B cell (primary cell): ENCODE measurements at regions of chr17 and their contacts with region 1.

Region 1: GRCh38 chr17:29124117-29124924 is 55.9 kb downstream of the MYO18A start:
- DNase-seq: peak; percentile 63
- ATAC-seq: peak; percentile 84
- H3K4me3 ChIP-seq: no peak overlapping the region
- H3K4me3 Mint-ChIP-seq: no peak overlapping the region
- H3K27ac ChIP-seq: no peak overlapping the region
- H3K27ac Mint-ChIP-seq: peak overlapping the region; percentile 7
- H3K4me1 ChIP-seq: peaks cover 0 to 4% of the 10 kb centered on the region in 2 donors
- H3K4me1 Mint-ChIP-seq: no peaks in the 10 kb centered on the region
- H3K27me3 ChIP-seq: no peaks in the 10 kb centered on the region
- H3K27me3 Mint-ChIP-seq: no peaks in the 10 kb centered on the region
- CTCF ChIP-seq: peak; percentile 60

Region 2: GRCh38 chr17:28967221-28968140 is 156.8 kb before region 1 on chr17:
- CTCF ChIA-PET with region 1: interaction called, 359 read pairs
- POLR2A ChIA-PET with region 1: interaction called, 3 read pairs
- intact Hi-C with region 1: no loop called
- DNase-seq: peak; percentile 50
- ATAC-seq: peak; percentile 21
- H3K4me3 ChIP-seq: no peak overlapping the region
- H3K4me3 Mint-ChIP-seq: no peak overlapping the region
- H3K27ac ChIP-seq: peak overlapping the region in 1 of 2 donors; percentile 40
- H3K27ac Mint-ChIP-seq: peak overlapping the region; percentile 66
- H3K4me1 ChIP-seq: peaks cover 4 to 17% of the 10 kb centered on the region in 2 donors
- H3K4me1 Mint-ChIP-seq: peaks cover 9% of the 10 kb centered on the region
- H3K27me3 ChIP-seq: peaks cover 0 to 15% (median 2%) of the 10 kb centered on the region in 4 experiments
- H3K27me3 Mint-ChIP-seq: peaks cover 13% of the 10 kb centered on the region
- CTCF ChIP-seq: no peak

Region 3: DNA sequence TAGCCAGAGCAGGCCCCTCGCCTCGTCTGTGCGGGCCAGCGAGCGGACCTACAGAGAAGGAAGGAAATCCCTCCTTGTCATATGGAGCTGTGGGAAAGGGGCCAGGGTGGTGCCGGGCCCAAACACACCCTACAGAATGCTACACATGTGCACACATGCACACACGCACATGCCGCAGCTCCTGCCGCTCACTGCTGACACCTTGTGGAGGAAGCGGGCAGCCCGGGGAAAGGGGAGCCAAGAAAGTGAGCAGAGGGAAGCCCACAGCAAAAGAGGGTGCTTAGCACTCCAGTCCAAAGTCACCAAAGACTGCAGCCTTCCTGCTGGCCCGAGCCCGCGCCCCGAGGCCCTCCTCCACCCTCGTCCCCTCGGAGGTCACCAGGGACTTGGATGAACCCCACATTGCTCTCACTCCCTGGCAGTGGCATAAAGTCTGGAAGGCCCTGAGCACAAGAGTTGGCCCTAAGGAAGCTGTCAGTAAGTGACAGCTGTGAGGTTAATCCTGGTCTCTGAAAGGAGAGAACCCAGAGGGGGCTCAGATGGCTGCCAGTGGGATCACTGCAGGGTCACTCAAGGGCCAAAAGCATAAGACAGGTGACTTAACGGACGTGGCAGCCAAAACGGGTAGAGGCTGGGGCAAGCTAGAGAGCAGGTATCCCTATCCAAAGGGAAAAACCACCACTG is 12.4 kb before region 1 on chr17:
- CTCF ChIA-PET with region 1: interaction called, 62 read pairs
- POLR2A ChIA-PET with region 1: no interaction called
- intact Hi-C with region 1: no loop called
- DNase-seq: peak; percentile 66
- ATAC-seq: peak; percentile 79
- H3K4me3 ChIP-seq: no peak overlapping the region
- H3K4me3 Mint-ChIP-seq: no peak overlapping the region
- H3K27ac ChIP-seq: no peak overlapping the region
- H3K27ac Mint-ChIP-seq: no peak overlapping the region
- H3K4me1 ChIP-seq: no peaks in the 10 kb centered on the region
- H3K4me1 Mint-ChIP-seq: peaks cover 5% of the 10 kb centered on the region
- H3K27me3 ChIP-seq: no peaks in the 10 kb centered on the region
- H3K27me3 Mint-ChIP-seq: no peaks in the 10 kb centered on the region
- CTCF ChIP-seq: peak; percentile 88

Region 4: GRCh38 chr17:29140051-29140621 is 15.8 kb after region 1 on chr17:
- CTCF ChIA-PET with region 1: interaction called, 120 read pairs
- POLR2A ChIA-PET with region 1: interaction called, 5 read pairs
- intact Hi-C with region 1: loop called (anchors 2 kb)
- DNase-seq: peak; percentile 66
- ATAC-seq: peak; percentile 60
- H3K4me3 ChIP-seq: peak overlapping the region; percentile 53 to 83 (median 75)
- H3K4me3 Mint-ChIP-seq: peak overlapping the region; percentile 91
- H3K27ac ChIP-seq: peak overlapping the region; percentile 42 to 81
- H3K27ac Mint-ChIP-seq: peak overlapping the region; percentile 98
- H3K4me1 ChIP-seq: peaks cover 42 to 60% of the 10 kb centered on the region in 2 donors
- H3K4me1 Mint-ChIP-seq: peaks cover 68% of the 10 kb centered on the region
- H3K27me3 ChIP-seq: no peaks in the 10 kb centered on the region
- H3K27me3 Mint-ChIP-seq: no peaks in the 10 kb centered on the region
- CTCF ChIP-seq: no peak

Region 5: DNA sequence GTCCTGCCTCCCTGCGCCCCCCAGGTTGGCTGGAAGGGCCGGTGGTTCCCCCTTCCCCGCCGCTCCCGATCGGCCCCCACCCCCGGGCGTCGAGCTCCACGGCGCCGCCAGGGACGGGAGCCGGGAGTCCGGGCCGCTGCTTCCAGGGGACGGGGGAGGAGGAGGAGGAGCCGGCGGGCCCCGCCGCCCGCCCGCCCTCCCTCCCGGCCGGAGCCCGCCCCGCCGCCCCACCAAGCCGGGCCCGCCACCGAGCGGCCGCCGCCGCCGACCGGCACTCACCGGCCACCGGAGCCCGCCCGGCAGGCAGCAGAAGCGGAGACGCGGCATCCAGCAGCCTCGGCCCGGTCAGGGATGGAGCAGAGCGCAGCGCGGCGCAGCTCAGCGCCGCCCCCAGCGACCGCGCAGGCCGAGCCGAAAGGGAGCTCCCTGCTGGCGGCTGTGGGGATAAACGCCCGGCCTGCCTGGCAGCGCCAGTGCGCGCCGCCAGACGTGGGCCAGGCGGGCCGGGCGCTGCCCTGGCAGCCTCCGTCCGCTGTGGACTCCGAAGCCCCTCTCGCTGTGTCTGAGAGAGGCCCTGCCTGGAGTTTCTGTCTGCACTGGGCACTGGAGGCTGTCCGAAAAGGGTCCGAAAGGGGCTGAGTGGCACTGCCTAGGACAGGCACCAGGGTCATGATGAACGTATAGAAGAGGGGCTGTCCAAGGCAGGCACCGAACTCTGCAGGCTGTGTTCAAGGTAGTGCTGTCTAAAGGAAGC is 55.9 kb after region 1 on chr17 and contains the start of gene MYO18A:
- CTCF ChIA-PET with region 1: interaction called, 80 read pairs
- POLR2A ChIA-PET with region 1: interaction called, 6 read pairs
- intact Hi-C with region 1: loop called (anchors 1 kb)
- DNase-seq: peak; percentile 87
- ATAC-seq: peak; percentile 97
- H3K4me3 ChIP-seq: peak within 1 kb of the TSS in 3 of 5 experiments; percentile 33 to 46 (median 44)
- H3K4me3 Mint-ChIP-seq: peak within 1 kb of the TSS; percentile 69
- H3K27ac ChIP-seq: no peak within 1 kb of the TSS
- H3K27ac Mint-ChIP-seq: no peak within 1 kb of the TSS
- H3K4me1 ChIP-seq: peaks cover 9 to 28% of the 10 kb centered on the region in 2 donors
- H3K4me1 Mint-ChIP-seq: peaks cover 16% of the 10 kb centered on the region
- H3K27me3 ChIP-seq: peaks cover 0 to 2% (median 0%) of the 10 kb centered on the region in 4 experiments
- H3K27me3 Mint-ChIP-seq: peaks cover 7% of the 10 kb centered on the region
- CTCF ChIP-seq: peak; percentile 81
- total RNA-seq, gene MYO18A: 155 and 169 TPM in 2 replicates

Region 6: GRCh38 chr17:29219378-29220047 is 95.2 kb after region 1 on chr17:
- CTCF ChIA-PET with region 1: interaction called, 66 read pairs
- POLR2A ChIA-PET with region 1: no interaction called
- intact Hi-C with region 1: loop called (anchors 1 kb)
- DNase-seq: peak; percentile 82
- ATAC-seq: peak; percentile 91
- H3K4me3 ChIP-seq: no peak overlapping the region
- H3K4me3 Mint-ChIP-seq: no peak overlapping the region
- H3K27ac ChIP-seq: no peak overlapping the region
- H3K27ac Mint-ChIP-seq: no peak overlapping the region
- H3K4me1 ChIP-seq: peaks cover 5 to 7% of the 10 kb centered on the region in 2 donors
- H3K4me1 Mint-ChIP-seq: peaks cover 8% of the 10 kb centered on the region
- H3K27me3 ChIP-seq: no peaks in the 10 kb centered on the region
- H3K27me3 Mint-ChIP-seq: peaks cover 5% of the 10 kb centered on the region
- CTCF ChIP-seq: peak; percentile 99

Region 7: DNA sequence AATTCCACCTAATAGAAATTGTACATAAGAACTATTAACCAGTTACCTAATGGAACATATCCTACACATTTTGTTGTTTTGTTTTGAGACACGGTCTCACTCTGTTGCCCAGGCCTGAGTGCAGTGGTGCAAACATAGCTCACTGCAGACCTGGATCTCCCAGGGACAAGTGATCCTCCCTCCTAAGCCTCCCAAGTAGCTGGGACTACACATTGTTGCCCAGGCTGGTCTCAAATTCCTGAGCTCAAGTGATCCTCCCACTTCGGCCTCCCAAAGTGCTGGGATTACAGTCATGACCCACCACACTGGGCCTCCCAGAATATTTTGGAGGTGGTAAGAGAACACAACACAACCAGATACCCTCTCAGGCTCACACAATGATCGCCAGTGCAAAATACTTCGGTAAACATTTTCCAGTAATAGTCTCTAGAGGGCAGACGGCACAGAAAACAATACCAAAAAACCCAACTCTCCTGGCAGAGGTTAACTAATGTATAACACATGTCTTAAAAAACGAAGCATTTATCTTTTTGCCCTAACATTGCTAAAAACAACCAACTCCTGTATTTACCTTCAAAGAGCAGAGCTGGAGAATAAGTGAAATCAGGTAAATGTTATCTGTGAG is 159.1 kb after region 1 on chr17:
- CTCF ChIA-PET with region 1: no interaction called
- POLR2A ChIA-PET with region 1: interaction called, 14 read pairs
- intact Hi-C with region 1: no loop called
- DNase-seq: no peak
- ATAC-seq: no peak
- H3K4me3 ChIP-seq: no peak overlapping the region
- H3K4me3 Mint-ChIP-seq: peak overlapping the region; percentile 12
- H3K27ac ChIP-seq: peak overlapping the region in 1 of 2 donors; percentile 40
- H3K27ac Mint-ChIP-seq: peak overlapping the region; percentile 8
- H3K4me1 ChIP-seq: peaks cover 8 to 17% of the 10 kb centered on the region in 2 donors
- H3K4me1 Mint-ChIP-seq: peaks cover 44% of the 10 kb centered on the region
- H3K27me3 ChIP-seq: no peaks in the 10 kb centered on the region
- H3K27me3 Mint-ChIP-seq: no peaks in the 10 kb centered on the region
- CTCF ChIP-seq: no peak